Common myeloid progenitor, CD34-positive (primary cell): ENCODE measurements at regions of chr11 and their contacts with region 1.

Region 1: GRCh38 chr11:134139873-134140331 is 71.0 kb downstream of the JAM3 start:
- DNase-seq: peak; percentile 70 to 87 (median 81)
- H3K4me3 ChIP-seq: no peak overlapping the region
- H3K27ac ChIP-seq: no peak overlapping the region
- H3K4me1 ChIP-seq: no peaks in the 10 kb centered on the region
- H3K27me3 ChIP-seq: no peaks in the 10 kb centered on the region

Region 2: DNA sequence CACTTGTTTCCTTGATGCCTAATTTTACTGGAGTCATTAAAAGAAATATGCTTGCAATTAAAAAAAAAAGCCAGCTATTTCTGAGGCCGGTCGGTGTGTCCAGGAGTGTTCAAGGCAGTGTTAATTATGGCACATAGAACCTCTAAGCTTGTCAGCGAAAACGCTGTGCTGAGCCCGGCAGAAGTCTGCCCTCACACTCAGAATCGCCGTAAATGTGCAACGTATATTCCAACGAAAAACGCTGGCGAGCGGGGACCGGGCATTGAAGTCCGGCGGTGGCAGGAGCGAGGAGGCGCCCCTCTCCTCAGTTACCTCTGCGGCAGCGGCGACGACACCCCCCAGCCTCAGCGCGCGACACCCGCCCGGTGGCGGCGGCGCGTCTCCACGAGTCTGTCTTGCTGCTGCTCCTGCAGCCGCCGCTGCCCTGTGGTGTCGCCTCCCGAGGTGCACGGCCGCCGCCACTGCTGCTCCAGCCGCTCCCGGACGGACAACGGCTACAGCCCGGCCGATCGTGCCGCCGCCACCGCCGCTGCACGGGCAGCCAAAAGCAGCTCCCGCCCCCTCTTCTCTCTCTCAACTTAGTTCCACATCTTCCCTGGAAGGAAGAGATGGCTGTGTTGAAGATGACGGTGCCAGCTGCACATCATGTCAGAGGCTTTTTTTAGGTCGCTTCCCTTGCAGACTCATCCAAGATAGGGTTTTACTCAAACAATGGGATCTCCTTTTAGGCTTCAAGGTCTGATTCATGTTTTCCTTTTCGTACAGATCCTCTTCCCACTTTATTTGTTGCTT is 15.0 kb before region 1 on chr11:
- CTCF ChIA-PET with region 1: interaction called, 16 read pairs
- POLR2A ChIA-PET with region 1: no interaction called
- DNase-seq: peak in 2 of 3 donors; percentile 33 to 56
- H3K4me3 ChIP-seq: peak overlapping the region; percentile 20 to 70 (median 50)
- H3K27ac ChIP-seq: no peak overlapping the region
- H3K4me1 ChIP-seq: peaks cover 2 to 30% (median 12%) of the 10 kb centered on the region in 4 experiments
- H3K27me3 ChIP-seq: peaks cover 0 to 28% (median 18%) of the 10 kb centered on the region in 5 experiments

Region 3: DNA sequence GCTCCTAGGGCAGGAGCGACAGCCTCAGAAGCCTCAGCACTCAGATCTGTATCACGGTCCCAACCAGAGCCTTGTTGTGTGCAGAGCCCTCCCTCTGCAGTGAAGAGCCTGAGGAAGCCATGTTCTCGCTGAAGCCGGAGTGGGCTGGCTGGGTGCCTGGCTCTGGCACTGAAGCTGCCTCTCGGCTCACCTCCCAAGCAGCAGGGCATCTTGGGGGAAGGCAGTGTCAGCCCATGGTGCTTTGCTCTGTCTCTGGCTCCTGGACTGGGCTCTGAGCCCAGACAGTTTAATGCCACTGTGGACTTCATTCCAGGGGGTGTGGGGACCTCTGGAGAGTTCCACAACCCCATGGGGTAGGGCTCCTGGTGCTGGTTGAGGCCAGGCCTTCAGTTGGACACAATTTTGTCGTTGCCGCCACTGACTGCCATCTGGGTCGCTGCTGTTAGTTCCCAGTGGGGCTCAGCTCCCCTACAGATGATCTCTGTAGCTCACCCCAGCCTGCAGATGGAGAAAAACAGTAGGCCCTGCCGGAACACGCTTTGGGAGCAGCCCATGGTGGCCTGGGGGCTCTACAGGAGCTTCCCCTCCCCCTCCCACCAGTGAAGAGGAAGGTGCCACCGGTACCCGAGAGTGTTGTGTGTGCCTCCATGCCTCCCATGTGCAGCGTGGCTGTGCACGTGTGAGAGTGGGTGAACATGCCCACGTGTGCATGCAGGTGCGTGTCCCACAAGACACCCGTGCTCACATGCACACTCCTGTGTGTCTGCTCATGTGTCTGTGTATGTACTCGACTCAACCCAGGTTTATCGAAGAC is 358.6 kb after region 1 on chr11:
- CTCF ChIA-PET with region 1: no interaction called
- POLR2A ChIA-PET with region 1: no interaction called
- DNase-seq: no peak
- H3K4me3 ChIP-seq: no peak overlapping the region
- H3K27ac ChIP-seq: no peak overlapping the region
- H3K4me1 ChIP-seq: no peaks in the 10 kb centered on the region
- H3K27me3 ChIP-seq: peaks cover 0 to 14% (median 9%) of the 10 kb centered on the region in 5 experiments